GM12878 (cell line): ENCODE measurements at regions of chr16 and their contacts with region 1.

Region 1: GRCh38 chr16:13056607-13057006 is 155.2 kb downstream of the SHISA9 start:
- DNase-seq: peak; percentile 45
- ATAC-seq: peak; percentile 93
- H3K4me3 ChIP-seq: no peak overlapping the region
- H3K27ac ChIP-seq: no peak overlapping the region
- H3K4me1 ChIP-seq: no peaks in the 10 kb centered on the region
- H3K27me3 ChIP-seq: no peaks in the 10 kb centered on the region
- CTCF ChIP-seq: no peak
- EP300 ChIP-seq: peak; percentile 34 to 80; a peak in 3 of 4 replicates
- POLR2A ChIP-seq: no peak
- RAD21 ChIP-seq: no peak

Region 2: DNA sequence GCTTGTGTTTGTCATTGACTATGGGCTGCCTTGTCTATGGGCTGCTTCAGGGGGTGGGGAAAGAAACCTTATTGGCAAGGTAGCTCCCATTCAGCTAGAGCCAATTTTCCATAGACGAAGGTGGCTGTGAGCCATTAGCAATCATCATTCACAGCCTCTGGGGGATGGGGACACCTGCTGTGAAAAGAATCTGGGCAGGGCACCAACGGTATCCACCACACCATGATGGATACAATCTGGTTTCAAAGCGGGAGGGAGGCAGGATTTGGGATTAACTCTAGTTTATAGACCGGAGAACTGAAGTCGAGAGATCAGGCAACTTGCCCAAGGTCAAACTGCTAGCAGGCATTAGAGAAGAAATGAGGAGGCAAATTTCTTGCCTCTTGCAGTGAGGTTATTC is 27.1 kb after region 1 on chr16:
- CTCF ChIA-PET with region 1: interaction called, 5 read pairs
- POLR2A ChIA-PET with region 1: interaction called, 3 read pairs
- RAD21 ChIA-PET with region 1: interaction called, 24 read pairs
- SMC1A ChIA-PET with region 1: interaction called, 12 read pairs
- in situ Hi-C with region 1: no loop called
- intact Hi-C with region 1: no loop called
- DNase-seq: no peak
- ATAC-seq: no peak
- H3K4me3 ChIP-seq: no peak overlapping the region
- H3K27ac ChIP-seq: no peak overlapping the region
- H3K4me1 ChIP-seq: no peaks in the 10 kb centered on the region
- H3K27me3 ChIP-seq: no peaks in the 10 kb centered on the region
- CTCF ChIP-seq: no peak
- EP300 ChIP-seq: no peak
- POLR2A ChIP-seq: no peak
- RAD21 ChIP-seq: no peak

Region 3: GRCh38 chr16:13110124-13110796 is 53.7 kb after region 1 on chr16:
- CTCF ChIA-PET with region 1: no interaction called
- POLR2A ChIA-PET with region 1: interaction called, 3 read pairs
- RAD21 ChIA-PET with region 1: interaction called, 12 read pairs
- SMC1A ChIA-PET with region 1: interaction called, 12 read pairs
- in situ Hi-C with region 1: no loop called
- intact Hi-C with region 1: no loop called
- DNase-seq: no peak
- ATAC-seq: no peak
- H3K4me3 ChIP-seq: no peak overlapping the region
- H3K27ac ChIP-seq: no peak overlapping the region
- H3K4me1 ChIP-seq: no peaks in the 10 kb centered on the region
- H3K27me3 ChIP-seq: no peaks in the 10 kb centered on the region
- CTCF ChIP-seq: no peak
- EP300 ChIP-seq: no peak
- POLR2A ChIP-seq: no peak
- RAD21 ChIP-seq: no peak

Region 4: DNA sequence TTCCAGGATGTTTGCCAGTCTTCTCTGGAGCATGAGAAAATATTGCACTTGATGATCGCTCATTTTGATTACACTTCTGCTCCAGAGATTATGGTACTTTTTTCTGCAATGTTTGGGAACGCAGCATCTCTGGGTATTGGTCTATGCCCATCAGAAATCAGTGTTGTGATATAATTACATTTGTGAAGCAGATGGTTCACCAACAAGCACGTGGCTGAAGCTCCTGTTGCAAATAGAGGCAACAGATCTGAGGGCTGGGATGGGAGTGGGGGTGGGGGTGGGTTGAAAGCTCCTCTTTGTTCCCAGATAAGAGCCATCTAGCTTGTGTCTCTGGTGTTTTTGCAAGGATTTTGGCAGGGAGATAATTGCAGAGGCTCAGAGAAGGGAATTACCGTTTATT is 97.1 kb after region 1 on chr16:
- CTCF ChIA-PET with region 1: no interaction called
- POLR2A ChIA-PET with region 1: interaction called, 3 read pairs
- RAD21 ChIA-PET with region 1: interaction called, 3 read pairs
- SMC1A ChIA-PET with region 1: interaction called, 10 read pairs
- in situ Hi-C with region 1: no loop called
- intact Hi-C with region 1: no loop called
- DNase-seq: no peak
- ATAC-seq: no peak
- H3K4me3 ChIP-seq: no peak overlapping the region
- H3K27ac ChIP-seq: no peak overlapping the region
- H3K4me1 ChIP-seq: no peaks in the 10 kb centered on the region
- H3K27me3 ChIP-seq: no peaks in the 10 kb centered on the region
- CTCF ChIP-seq: no peak
- EP300 ChIP-seq: no peak
- POLR2A ChIP-seq: no peak
- RAD21 ChIP-seq: no peak

Region 5: GRCh38 chr16:13697568-13697967 is 641.0 kb after region 1 on chr16:
- CTCF ChIA-PET with region 1: no interaction called
- POLR2A ChIA-PET with region 1: no interaction called
- RAD21 ChIA-PET with region 1: no interaction called
- SMC1A ChIA-PET with region 1: no interaction called
- in situ Hi-C with region 1: no loop called
- intact Hi-C with region 1: no loop called
- DNase-seq: no peak
- ATAC-seq: no peak
- H3K4me3 ChIP-seq: no peak overlapping the region
- H3K27ac ChIP-seq: no peak overlapping the region
- H3K4me1 ChIP-seq: no peaks in the 10 kb centered on the region
- H3K27me3 ChIP-seq: no peaks in the 10 kb centered on the region
- CTCF ChIP-seq: no peak
- EP300 ChIP-seq: no peak
- POLR2A ChIP-seq: no peak
- RAD21 ChIP-seq: no peak